Activated naive CD4-positive, alpha-beta T cell treated with anti-CD3 and anti-CD28 coated beads for 36 hours (primary cell): ENCODE measurements at regions of chr6 and their contacts with region 1.

Region 1: DNA sequence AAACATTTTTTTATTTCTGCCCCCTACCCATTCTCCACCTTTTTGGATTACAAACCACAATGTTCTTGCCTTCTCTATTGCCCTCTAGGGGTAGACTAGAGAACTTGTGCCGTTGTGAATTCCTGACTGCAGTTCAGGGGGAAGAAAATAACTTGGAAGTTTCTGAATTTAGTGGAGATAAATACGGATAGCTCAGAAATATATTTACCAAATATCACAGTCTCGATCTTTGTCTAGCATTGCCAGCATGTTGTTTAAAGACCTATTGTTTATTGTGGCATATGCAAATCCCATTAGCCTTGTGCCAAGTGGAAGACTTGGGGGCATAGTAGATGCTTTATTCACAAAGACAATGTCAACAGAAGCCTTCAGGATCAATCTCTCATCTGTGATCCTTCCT is 154.1 kb upstream of the MMS22L start:
- DNase-seq: no peak
- H3K4me3 Mint-ChIP-seq: no peak overlapping the region
- H3K27ac Mint-ChIP-seq: no peak overlapping the region
- H3K4me1 Mint-ChIP-seq: no peaks in the 10 kb centered on the region
- H3K27me3 Mint-ChIP-seq: peaks cover 10% of the 10 kb centered on the region

Region 2: DNA sequence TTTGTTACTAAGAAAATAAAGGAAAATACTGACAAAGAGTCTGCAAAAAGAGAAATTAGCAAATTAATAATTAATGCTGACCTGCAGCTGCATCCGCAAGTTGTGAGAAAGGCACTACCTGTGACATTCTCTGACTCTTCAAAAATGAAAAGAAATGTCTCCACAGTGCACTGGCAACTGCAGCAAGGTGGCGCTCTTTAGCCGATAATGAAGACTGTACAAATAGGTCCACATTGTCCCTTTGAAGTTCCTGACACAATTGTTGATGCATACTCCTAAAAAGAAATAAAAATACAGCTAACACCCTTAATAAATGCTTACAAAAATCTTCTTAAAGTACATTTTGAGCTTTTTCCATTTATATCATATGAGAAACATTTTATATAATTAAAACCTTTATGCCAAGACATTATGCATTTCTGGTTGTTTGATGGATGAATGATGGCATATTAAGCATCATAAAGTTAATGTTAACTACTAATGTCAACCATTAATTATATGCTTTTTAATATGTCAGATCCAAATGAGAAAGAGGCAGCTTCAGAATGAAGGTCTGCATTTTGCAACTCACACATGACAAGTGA is 250.6 kb before region 1 on chr6:
- CTCF ChIA-PET with region 1: no interaction called
- intact Hi-C with region 1: loop called (anchors 1 kb)
- DNase-seq: peak; percentile 81
- H3K4me3 Mint-ChIP-seq: no peak overlapping the region
- H3K27ac Mint-ChIP-seq: no peak overlapping the region
- H3K4me1 Mint-ChIP-seq: no peaks in the 10 kb centered on the region
- H3K27me3 Mint-ChIP-seq: no peaks in the 10 kb centered on the region